Right cardiac atrium (tissue), 5 donors: ENCODE measurements at regions of chr19 and their contacts with region 1.

Region 1: GRCh38 chr19:56751078-56751489 is 79.5 kb upstream of the ZNF835 start:
- DNase-seq: peak in 1 of 3 donors; percentile 43
- ATAC-seq: no peak
- H3K4me3 ChIP-seq: no peak overlapping the region
- H3K27ac ChIP-seq: no peak overlapping the region
- H3K4me1 ChIP-seq: no peaks in the 10 kb centered on the region
- H3K27me3 ChIP-seq: no peaks in the 10 kb centered on the region

Region 2: GRCh38 chr19:56707821-56708220 is 43.3 kb before region 1 on chr19:
- intact Hi-C with region 1: no loop called
- DNase-seq: no peak
- ATAC-seq: no peak
- H3K4me3 ChIP-seq: no peak overlapping the region
- H3K27ac ChIP-seq: no peak overlapping the region
- H3K4me1 ChIP-seq: no peaks in the 10 kb centered on the region
- H3K27me3 ChIP-seq: no peaks in the 10 kb centered on the region

Region 3: GRCh38 chr19:56806639-56807038 is 55.6 kb after region 1 on chr19:
- intact Hi-C with region 1: no loop called
- DNase-seq: no peak
- ATAC-seq: no peak
- H3K4me3 ChIP-seq: no peak overlapping the region
- H3K27ac ChIP-seq: no peak overlapping the region
- H3K4me1 ChIP-seq: no peaks in the 10 kb centered on the region
- H3K27me3 ChIP-seq: no peaks in the 10 kb centered on the region

Region 4: GRCh38 chr19:57099199-57099661 is 348.1 kb after region 1 on chr19:
- intact Hi-C with region 1: loop called in 1 of 4 experiments (anchors 5 kb)
- DNase-seq: peak; percentile 74 to 88 (median 87)
- ATAC-seq: peak; percentile 67 to 84
- H3K4me3 ChIP-seq: no peak overlapping the region
- H3K27ac ChIP-seq: no peak overlapping the region
- H3K4me1 ChIP-seq: no peaks in the 10 kb centered on the region
- H3K27me3 ChIP-seq: no peaks in the 10 kb centered on the region